ENCODE measurements at regions of chr4 and their contacts with region 1.

Region 1: DNA sequence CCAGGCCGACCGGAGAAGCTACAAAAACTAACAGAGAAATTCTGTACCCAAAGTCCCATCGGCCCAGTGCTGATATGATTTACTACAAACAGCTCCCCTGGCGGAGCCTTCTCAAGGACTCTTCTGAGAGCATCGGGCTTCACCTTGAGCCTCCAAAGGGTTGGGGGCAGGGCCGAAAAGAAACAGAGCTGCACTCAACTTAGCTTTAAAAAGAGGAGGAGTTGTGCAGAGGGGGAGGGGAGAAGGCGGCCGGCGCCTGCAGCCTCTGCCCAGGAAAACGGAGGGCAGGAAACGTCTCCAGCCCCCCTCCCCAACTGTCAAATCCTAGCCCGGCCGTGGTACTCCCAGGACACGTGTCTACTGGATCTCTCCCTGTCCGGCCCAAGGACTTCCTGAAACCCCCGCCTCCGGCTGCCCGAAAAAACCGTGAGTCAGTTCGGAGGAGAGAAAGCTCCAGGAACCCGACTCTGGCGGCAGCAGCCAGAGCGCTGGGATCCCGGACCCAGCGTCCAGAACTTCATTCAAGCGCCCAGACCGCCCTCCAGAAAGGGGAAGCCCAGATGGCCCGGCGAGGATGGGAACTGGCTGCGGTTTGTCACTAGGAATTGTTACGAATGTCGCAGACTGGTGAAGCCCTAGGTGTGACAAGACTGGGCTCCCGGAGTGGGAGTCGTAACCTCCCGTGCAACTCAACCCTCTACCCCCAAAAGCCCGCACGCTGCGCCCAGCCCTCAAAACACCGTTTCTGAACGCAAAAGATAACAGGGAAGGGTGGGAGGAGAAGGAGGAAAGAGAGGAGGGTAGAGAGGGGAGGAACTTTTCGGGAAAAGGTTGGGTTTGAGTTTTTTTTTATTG is 973 bp downstream of the ADAMTS3 start:
- DNase-seq: peak; percentile 87
- H3K4me3 ChIP-seq: peak overlapping the region; percentile 35 to 67 (median 61)
- H3K27ac ChIP-seq: peak overlapping the region; percentile 76 to 84 (median 81)
- H3K4me1 ChIP-seq: peaks cover 0 to 18% (median 4%) of the 10 kb centered on the region in 4 donors
- H3K27me3 ChIP-seq: no peaks in the 10 kb centered on the region
- CTCF ChIP-seq: peak in 2 of 4 experiments; percentile 9 to 24
- EP300 ChIP-seq: no peak
- POLR2A ChIP-seq: no peak

Region 2: GRCh38 chr4:72613959-72614358 is 45.9 kb after region 1 on chr4:
- intact Hi-C with region 1: no loop called
- DNase-seq: no peak
- H3K4me3 ChIP-seq: no peak overlapping the region
- H3K27ac ChIP-seq: no peak overlapping the region
- H3K4me1 ChIP-seq: no peaks in the 10 kb centered on the region
- H3K27me3 ChIP-seq: no peaks in the 10 kb centered on the region
- CTCF ChIP-seq: no peak
- EP300 ChIP-seq: no peak
- POLR2A ChIP-seq: no peak

Region 3: GRCh38 chr4:73069338-73070073 is 501.5 kb after region 1 on chr4 and contains the start of gene COX18:
- intact Hi-C with region 1: loop called (anchors 5 kb)
- DNase-seq: peak; percentile 99
- H3K4me3 ChIP-seq: peak within 1 kb of the TSS; percentile 64 to 87 (median 76)
- H3K27ac ChIP-seq: peak within 1 kb of the TSS; percentile 92 to 97 (median 94)
- H3K4me1 ChIP-seq: peaks cover 0 to 34% (median 21%) of the 10 kb centered on the region in 4 donors
- H3K27me3 ChIP-seq: no peaks in the 10 kb centered on the region
- CTCF ChIP-seq: no peak
- EP300 ChIP-seq: peak in 2 of 4 donors; percentile 62 to 91
- POLR2A ChIP-seq: peak; percentile 62 to 69
- total RNA-seq, gene COX18: 9.6 to 21.3 (median 16.3) TPM